ENCODE measurements at regions of chr1 and their contacts with region 1.

Region 1: GRCh38 chr1:53220171-53220961 is at the start of gene CZIB:
- DNase-seq: peak; percentile 93
- ATAC-seq: peak; percentile 93
- H3K4me3 ChIP-seq: peak within 1 kb of the TSS; percentile 79
- H3K27ac ChIP-seq: peak within 1 kb of the TSS; percentile 81
- H3K4me1 ChIP-seq: peaks cover 16% of the 10 kb centered on the region
- H3K27me3 ChIP-seq: no peaks in the 10 kb centered on the region
- CTCF ChIP-seq: no peak
- total RNA-seq, gene CZIB: 44.1 and 47.7 TPM in 2 replicates

Region 2: DNA sequence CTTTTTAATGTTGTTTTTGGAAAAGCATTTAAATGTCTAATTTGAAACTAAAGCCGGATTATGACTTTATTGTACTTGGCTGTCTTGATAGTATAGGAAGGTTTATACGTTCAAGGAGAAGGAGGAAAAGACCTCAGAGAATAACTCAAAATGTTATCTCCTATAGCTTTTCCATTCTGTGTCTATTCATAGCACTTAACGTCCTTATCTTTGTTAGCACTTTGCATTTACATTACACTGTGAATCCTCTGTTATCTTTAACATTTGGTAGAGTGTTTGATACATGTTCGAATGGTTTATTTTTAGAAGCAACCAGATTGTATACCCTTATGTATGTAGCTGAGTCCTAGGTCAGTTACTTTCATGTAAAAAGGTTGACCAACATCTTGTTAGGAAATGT is 209.2 kb before region 1 on chr1:
- CTCF ChIA-PET with region 1: no interaction called
- POLR2A ChIA-PET with region 1: no interaction called
- intact Hi-C with region 1: no loop called
- DNase-seq: no peak
- ATAC-seq: no peak
- H3K4me3 ChIP-seq: no peak overlapping the region
- H3K27ac ChIP-seq: no peak overlapping the region
- H3K4me1 ChIP-seq: peaks cover 7% of the 10 kb centered on the region
- H3K27me3 ChIP-seq: no peaks in the 10 kb centered on the region
- CTCF ChIP-seq: no peak

Region 3: DNA sequence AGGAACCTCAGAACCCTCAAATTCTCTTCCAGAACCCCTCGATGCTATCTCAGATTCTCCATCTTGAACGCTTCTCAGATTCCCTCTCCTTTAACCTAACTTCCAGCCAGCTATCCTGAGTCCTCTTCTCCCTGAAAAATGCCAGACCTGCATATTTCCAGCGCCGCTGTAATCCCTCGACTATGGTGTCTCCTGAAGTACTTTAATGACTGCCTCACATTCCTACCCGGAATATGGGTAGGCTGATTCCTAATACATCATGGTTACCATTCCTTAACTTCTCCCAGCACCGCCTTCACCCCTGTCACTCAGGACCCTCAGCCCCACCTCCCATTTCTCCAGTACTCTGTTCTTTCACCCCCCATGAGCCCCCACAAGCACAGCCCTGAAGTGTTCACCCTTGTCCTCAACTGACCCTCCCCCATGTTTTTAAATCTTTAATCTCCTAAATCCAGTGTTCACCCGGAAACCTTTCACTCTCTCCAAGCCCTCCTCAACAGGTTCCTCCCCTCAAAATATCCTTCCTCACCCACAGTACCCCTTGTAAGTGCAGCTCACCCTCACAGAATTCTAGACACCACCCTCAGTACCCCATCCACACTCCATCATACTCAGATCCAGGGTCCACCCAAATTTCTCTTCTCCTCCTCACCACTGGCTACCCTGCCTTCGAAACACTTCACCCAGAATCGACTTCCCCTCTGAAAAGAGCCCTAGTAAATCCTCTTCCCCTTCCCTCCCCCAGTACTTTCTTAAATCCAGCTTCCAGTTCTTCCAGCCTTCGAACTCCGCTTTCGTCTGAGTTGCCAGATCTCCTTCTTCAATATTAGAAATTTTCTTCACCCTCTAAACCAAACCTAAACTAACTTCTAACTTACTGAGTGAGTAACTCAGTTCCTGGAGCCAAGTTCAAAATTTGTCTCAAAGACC is 22.8 kb before region 1 on chr1:
- CTCF ChIA-PET with region 1: no interaction called
- POLR2A ChIA-PET with region 1: no interaction called
- intact Hi-C with region 1: no loop called
- DNase-seq: no peak
- ATAC-seq: peak; percentile 10; the same call in 1 of the 2 replicates
- H3K4me3 ChIP-seq: peak overlapping the region; percentile 91
- H3K27ac ChIP-seq: peak overlapping the region; percentile 55
- H3K4me1 ChIP-seq: peaks cover 23% of the 10 kb centered on the region
- H3K27me3 ChIP-seq: no peaks in the 10 kb centered on the region
- CTCF ChIP-seq: no peak

Region 4: DNA sequence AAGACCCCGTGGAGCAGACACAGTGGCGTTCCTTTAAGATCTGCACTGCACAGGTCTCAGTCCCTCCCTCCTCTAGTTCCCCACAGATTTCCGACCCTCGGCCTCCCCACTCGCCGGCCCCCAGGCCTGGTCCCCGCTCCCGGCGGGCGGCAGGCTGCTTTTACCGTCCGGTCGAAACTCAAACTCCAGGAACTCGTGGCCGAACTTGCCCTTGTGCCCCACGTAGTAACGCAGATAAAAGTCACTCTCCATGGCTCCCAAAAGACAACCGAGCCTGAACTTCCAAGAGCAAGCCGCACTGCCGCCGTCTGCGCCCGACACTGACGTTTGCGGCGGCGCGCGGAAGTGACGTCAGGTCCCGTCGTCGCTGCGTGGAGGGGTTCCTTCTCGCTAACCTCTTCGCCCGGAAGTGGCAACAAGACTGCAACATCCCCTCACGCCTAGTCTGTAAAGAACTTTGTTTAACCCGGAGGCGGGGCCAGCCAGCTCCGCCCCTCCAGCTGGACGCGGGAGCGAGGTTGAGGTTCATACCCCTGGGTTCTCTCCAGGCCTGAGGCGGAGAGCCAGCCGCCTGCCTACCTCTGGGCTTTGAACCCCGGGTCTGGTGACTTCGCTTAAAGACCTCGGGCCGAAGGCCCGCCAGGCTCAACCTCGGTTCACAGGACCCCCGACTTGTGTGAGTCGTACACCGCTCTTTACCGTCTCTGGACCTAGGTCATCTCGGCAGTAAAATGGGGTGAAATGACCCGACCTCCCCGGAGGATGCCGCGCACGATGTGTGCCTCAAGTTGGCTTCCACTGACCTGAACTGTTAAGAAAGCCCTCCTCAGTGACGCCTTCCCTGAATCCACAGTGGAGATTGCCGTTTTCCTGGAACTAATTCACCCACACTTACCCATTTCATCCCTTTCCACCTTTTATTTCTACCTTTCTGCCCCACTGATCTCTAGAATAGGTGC is 18.1 kb after region 1 on chr1 and contains the start of gene MAGOH:
- CTCF ChIA-PET with region 1: no interaction called
- POLR2A ChIA-PET with region 1: interaction called, 6 read pairs
- intact Hi-C with region 1: loop called (anchors 1 kb)
- DNase-seq: peak; percentile 91
- ATAC-seq: peak; percentile 95
- H3K4me3 ChIP-seq: peak within 1 kb of the TSS; percentile 98
- H3K27ac ChIP-seq: peak within 1 kb of the TSS; percentile 45
- H3K4me1 ChIP-seq: peaks cover 23% of the 10 kb centered on the region
- H3K27me3 ChIP-seq: no peaks in the 10 kb centered on the region
- CTCF ChIP-seq: no peak
- total RNA-seq, gene MAGOH: 48.9 and 53.1 TPM in 2 replicates

Region 5: GRCh38 chr1:53249706-53250105 is 29.3 kb after region 1 on chr1:
- CTCF ChIA-PET with region 1: no interaction called
- POLR2A ChIA-PET with region 1: no interaction called
- intact Hi-C with region 1: no loop called
- DNase-seq: no peak
- ATAC-seq: no peak
- H3K4me3 ChIP-seq: no peak overlapping the region
- H3K27ac ChIP-seq: no peak overlapping the region
- H3K4me1 ChIP-seq: no peaks in the 10 kb centered on the region
- H3K27me3 ChIP-seq: no peaks in the 10 kb centered on the region
- CTCF ChIP-seq: no peak

Region 6: DNA sequence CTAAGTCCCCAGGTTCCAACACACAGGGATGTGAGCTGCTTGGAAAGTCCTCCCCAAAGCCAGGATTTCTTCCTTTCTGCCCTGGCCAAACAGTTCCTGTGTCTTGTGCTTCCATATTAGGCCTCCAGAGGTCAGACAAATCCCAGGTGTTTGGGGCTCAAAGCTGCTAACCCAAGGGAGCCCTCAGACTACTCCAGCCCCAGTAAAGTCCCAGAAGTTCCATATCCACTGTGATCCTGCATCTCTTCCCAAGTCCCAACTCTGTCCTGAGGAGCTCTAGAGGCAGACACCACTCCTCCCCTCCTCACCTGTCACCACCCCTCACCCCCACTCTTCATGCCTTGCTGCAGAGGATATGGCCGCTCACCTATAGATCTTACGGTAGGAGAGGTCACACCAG is 45.7 kb after region 1 on chr1:
- CTCF ChIA-PET with region 1: no interaction called
- POLR2A ChIA-PET with region 1: no interaction called
- intact Hi-C with region 1: no loop called
- DNase-seq: peak; percentile 50
- ATAC-seq: peak; percentile 78
- H3K4me3 ChIP-seq: no peak overlapping the region
- H3K27ac ChIP-seq: no peak overlapping the region
- H3K4me1 ChIP-seq: no peaks in the 10 kb centered on the region
- H3K27me3 ChIP-seq: no peaks in the 10 kb centered on the region
- CTCF ChIP-seq: peak; percentile 57

Measured in PC-3 (cell line).